ENCODE measurements at regions of chr22 and their contacts with region 1.

Region 1: GRCh38 chr22:44646668-44647067 is 55.3 kb upstream of the PRR5 start:
- DNase-seq: no peak
- ATAC-seq: no peak
- H3K4me3 ChIP-seq: no peak overlapping the region
- H3K27ac ChIP-seq: no peak overlapping the region
- H3K4me1 ChIP-seq: peaks cover 5% of the 10 kb centered on the region; the same call in 1 of the 2 replicates
- H3K27me3 ChIP-seq: no peaks in the 10 kb centered on the region
- CTCF ChIP-seq: no peak

Region 2: GRCh38 chr22:44542561-44543222 is 104.0 kb before region 1 on chr22:
- CTCF ChIA-PET with region 1: no interaction called
- POLR2A ChIA-PET with region 1: interaction called, 12 read pairs
- in situ Hi-C with region 1: no loop called
- intact Hi-C with region 1: no loop called
- DNase-seq: no peak
- ATAC-seq: no peak
- H3K4me3 ChIP-seq: no peak overlapping the region
- H3K27ac ChIP-seq: no peak overlapping the region
- H3K4me1 ChIP-seq: no peaks in the 10 kb centered on the region
- H3K27me3 ChIP-seq: no peaks in the 10 kb centered on the region
- CTCF ChIP-seq: no peak